HEK293 (cell line): ENCODE measurements at regions of chr11 and their contacts with region 1.

Region 1: DNA sequence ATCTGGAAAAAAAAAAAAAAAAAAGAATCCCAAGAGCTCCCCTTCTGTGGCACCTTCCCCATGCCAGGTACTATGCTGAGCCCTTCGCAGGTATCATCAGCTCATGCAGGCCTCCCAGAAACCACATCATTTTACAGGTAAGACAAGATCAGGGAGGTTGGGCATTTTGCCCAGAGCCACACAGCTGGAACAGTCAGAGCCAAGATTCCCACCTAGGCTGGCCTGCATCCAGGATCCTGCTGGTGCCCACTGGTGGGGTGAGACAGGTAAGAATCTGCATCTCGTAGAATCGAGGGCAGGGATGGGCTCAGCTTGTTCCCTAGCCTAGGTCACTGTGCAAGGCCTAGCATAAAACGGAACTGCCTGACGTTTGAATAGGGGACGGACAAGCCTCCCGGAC is 15.7 kb upstream of the MEN1 start:
- H3K4me3 ChIP-seq: no peak overlapping the region
- H3K27ac ChIP-seq: no peak overlapping the region
- H3K4me1 ChIP-seq: no peaks in the 10 kb centered on the region
- CTCF ChIP-seq: no peak

Region 2: GRCh38 chr11:64810271-64810890 is 15.7 kb before region 1 on chr11 and contains the start of gene MEN1:
- CTCF ChIA-PET with region 1: interaction called, 6 read pairs
- POLR2A ChIA-PET with region 1: interaction called, 12 read pairs
- H3K4me3 ChIP-seq: peak within 1 kb of the TSS; percentile 75
- H3K27ac ChIP-seq: no peak within 1 kb of the TSS; the same call in 1 of the 2 replicates
- H3K4me1 ChIP-seq: no peaks in the 10 kb centered on the region
- CTCF ChIP-seq: no peak